HAP-1 (cell line): ENCODE measurements at regions of chr5 and their contacts with region 1.

Region 1: GRCh38 chr5:32232441-32233219 is 58.5 kb upstream of the GOLPH3 start:
- DNase-seq: peak; percentile 38 to 79
- H3K4me3 ChIP-seq: no peak overlapping the region
- H3K4me1 ChIP-seq: no peaks in the 10 kb centered on the region
- H3K27me3 ChIP-seq: no peaks in the 10 kb centered on the region

Region 2: DNA sequence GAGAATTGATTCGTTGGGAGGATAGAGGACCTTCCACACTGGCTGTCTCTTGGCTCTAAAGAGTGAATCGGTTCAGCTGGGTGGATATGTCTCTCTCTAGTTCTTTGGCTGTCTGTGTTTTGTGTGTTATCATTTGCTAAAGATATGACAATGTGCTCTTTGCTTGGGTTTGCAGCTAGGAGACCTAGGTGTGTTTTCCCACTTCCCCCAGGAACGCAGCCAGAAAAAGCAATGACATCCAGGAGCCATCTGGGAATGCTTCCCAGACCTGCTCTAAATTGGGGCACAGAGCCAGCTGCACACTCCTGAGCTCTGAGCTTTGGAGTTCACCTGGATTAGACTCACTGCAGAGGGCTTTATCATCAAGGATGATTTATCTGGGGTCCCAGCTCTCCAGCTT is 606.5 kb before region 1 on chr5:
- in situ Hi-C with region 1: no loop called
- DNase-seq: no peak
- H3K4me3 ChIP-seq: no peak overlapping the region
- H3K4me1 ChIP-seq: no peaks in the 10 kb centered on the region
- H3K27me3 ChIP-seq: no peaks in the 10 kb centered on the region

Region 3: GRCh38 chr5:31944684-31945445 is 287.8 kb before region 1 on chr5:
- in situ Hi-C with region 1: no loop called
- DNase-seq: no peak
- H3K4me3 ChIP-seq: no peak overlapping the region
- H3K4me1 ChIP-seq: no peaks in the 10 kb centered on the region
- H3K27me3 ChIP-seq: no peaks in the 10 kb centered on the region

Region 4: DNA sequence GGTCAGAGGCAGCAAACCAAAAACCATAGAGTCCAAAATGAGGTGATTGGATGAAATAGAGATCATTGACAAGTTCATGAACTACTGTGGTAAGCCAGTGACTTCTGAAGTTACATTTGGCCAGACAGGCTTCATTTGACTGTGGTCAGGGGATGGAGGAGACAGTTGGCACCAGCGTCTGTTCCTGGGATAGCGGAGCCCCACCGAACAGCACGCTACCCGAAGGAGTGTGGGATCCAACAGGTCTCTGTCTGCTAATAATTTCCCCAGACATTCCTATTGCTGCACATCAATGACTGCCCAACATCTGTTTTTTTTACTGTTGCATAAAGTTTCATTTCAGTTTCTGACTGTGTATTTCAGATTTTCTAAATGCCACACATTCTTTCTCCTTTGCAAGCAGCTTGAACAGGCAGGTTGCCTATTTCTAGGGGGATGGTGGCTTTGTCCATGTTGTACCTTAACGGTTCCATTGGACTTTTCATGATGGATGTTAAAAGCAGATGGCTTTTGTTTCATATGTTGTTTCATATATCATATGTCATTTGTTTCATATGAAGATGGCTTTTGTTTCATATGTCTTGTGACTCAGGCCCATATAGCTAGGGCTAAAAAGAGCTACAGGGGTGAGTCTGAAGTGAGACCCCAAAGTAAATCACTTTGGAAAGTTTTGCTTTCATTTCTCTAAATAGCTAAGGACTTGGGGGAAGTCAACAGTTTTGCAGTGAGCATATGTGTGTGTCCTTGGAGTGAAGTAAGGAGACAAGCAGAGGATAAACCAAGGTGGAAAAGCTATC is 239.3 kb before region 1 on chr5:
- in situ Hi-C with region 1: no loop called
- DNase-seq: no peak
- H3K4me3 ChIP-seq: no peak overlapping the region
- H3K4me1 ChIP-seq: peaks cover 14% of the 10 kb centered on the region
- H3K27me3 ChIP-seq: no peaks in the 10 kb centered on the region

Region 5: GRCh38 chr5:32304622-32305021 is 72.0 kb after region 1 on chr5:
- in situ Hi-C with region 1: no loop called
- DNase-seq: no peak
- H3K4me3 ChIP-seq: no peak overlapping the region
- H3K4me1 ChIP-seq: no peaks in the 10 kb centered on the region; the same call in 1 of the 2 replicates
- H3K27me3 ChIP-seq: no peaks in the 10 kb centered on the region

Region 6: GRCh38 chr5:32613050-32613672 is 380.5 kb after region 1 on chr5:
- in situ Hi-C with region 1: loop called (anchors 25 kb)
- DNase-seq: peak; percentile 48 to 89
- H3K4me3 ChIP-seq: no peak overlapping the region
- H3K4me1 ChIP-seq: peaks cover 7% of the 10 kb centered on the region; the same call in 1 of the 2 replicates
- H3K27me3 ChIP-seq: no peaks in the 10 kb centered on the region